Dorsolateral prefrontal cortex (tissue), 120 donors: ENCODE measurements at regions of chr6 and their contacts with region 1.

Region 1: DNA sequence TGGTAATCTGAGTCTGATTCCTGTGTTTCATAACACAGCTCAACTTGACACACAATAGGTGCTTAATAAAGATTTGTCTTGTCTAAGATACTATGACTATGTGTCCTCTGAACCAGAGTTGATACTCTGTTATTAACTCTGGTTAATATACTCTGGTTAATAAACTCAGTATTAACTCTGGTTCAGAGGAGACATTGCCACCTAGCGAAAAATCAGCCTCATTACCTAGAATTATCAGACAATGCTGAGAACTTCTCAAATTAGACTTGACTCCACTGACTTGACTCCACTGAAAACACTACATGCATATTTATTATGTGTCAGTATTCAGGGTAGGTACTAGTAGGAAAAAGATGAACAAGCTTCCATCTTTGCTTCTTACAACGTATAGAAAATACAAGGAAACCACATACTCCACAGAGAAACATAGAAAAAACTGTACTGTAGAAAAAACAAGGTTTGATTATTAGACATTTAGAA is 73.9 kb downstream of the AHI1 start:
- DNase-seq: no peak
- H3K4me3 ChIP-seq: no peak overlapping the region
- H3K27ac ChIP-seq: no peak overlapping the region
- H3K27me3 ChIP-seq: no peaks in the 10 kb centered on the region
- CTCF ChIP-seq: peak; percentile 15 to 70 (median 54)

Region 2: DNA sequence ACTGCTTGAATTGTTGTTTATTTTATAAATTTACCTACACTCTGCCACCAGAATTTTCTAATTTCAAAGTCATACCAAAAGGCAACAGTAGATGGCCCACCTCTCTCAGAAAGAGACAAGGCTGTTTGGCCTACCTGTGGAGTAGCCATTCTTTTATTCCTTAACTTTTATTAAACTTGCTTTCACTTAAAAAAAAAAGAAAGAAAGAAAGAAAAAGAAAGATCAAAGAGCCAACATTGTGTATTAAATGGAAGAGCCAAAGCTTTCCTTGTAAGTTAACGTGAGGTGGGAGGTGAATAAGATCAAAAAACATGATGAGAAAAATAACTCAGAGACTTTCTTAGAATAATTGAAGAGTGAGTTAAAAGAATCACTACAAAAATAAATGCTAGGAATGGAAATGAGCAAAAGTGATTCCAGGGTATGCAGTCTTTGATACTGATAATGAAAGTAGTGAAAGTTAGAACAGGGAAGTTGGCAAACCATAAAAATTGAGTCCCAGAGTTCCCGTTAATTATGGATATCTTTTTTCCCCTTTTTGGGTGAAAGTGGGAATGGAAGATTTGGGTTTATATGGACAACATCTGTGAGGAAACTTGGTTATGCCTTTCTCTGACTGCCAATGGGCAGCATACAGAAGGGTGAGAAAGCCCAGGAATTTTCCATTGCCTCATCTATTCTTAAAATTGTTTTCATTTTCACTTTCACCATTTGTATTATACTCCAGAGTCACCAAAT is 278.5 kb before region 1 on chr6:
- intact Hi-C with region 1: loop called in 1 of 2 experiments (anchors 10 kb)
- DNase-seq: no peak
- H3K4me3 ChIP-seq: no peak overlapping the region
- H3K27ac ChIP-seq: no peak overlapping the region
- H3K27me3 ChIP-seq: no peaks in the 10 kb centered on the region
- CTCF ChIP-seq: peak in 49 of 56 donors; percentile 19 to 69 (median 46)

Region 3: GRCh38 chr6:135162678-135163439 is 260.8 kb before region 1 on chr6:
- intact Hi-C with region 1: no loop called
- DNase-seq: no peak
- H3K4me3 ChIP-seq: no peak overlapping the region
- H3K27ac ChIP-seq: no peak overlapping the region
- H3K27me3 ChIP-seq: peaks cover 0 to 37% (median 2%) of the 10 kb centered on the region in 45 donors
- CTCF ChIP-seq: peak in 51 of 56 donors; percentile 23 to 63 (median 46)

Region 4: DNA sequence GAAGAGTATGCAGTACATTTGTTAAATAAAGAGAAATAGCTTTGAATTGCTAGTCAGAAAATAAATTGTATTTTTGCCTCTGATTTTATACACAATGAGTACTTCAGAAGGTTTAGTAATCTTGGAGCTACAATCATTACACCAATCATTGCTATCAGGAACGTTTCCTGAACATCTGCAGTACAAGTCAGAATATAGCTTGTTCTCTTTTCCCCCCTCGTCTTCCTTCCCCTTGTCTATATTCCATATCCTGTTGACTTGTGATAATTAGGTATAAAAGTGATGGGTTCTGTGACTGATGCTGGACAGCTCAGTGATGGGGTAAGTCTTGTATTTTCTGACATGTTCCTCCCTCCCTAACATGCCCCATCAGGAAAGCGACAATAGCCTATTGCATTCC is 20.1 kb before region 1 on chr6:
- intact Hi-C with region 1: no loop called
- DNase-seq: no peak
- H3K4me3 ChIP-seq: no peak overlapping the region
- H3K27ac ChIP-seq: no peak overlapping the region
- H3K27me3 ChIP-seq: no peaks in the 10 kb centered on the region
- CTCF ChIP-seq: no peak

Region 5: DNA sequence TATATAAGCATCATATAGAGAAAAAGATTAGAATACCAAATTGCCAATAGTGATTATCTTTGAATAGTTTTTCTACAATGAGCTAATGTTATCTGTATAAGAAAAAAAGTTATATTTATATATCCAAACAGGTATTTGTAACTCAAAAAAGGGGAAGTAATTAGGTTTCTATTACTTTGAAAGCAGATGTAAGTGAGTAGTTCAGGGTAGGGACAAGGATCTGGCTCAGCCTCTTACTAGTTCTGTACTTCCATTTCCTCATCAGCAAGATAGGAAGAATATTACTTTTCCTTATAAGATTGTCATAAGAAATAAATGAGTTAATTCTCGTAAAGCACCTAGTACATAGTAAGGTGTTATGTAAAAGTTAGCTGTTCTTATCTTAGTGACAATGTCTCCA is 41.6 kb after region 1 on chr6:
- intact Hi-C with region 1: no loop called
- DNase-seq: no peak
- H3K4me3 ChIP-seq: no peak overlapping the region
- H3K27ac ChIP-seq: no peak overlapping the region
- H3K27me3 ChIP-seq: no peaks in the 10 kb centered on the region
- CTCF ChIP-seq: no peak